ENCODE measurements at regions of chr20 and their contacts with region 1.

Region 1: GRCh38 chr20:1900321-1900801 is 5.2 kb downstream of the SIRPA start:
- DNase-seq: peak; percentile 52
- ATAC-seq: peak; percentile 22
- H3K4me3 ChIP-seq: no peak overlapping the region
- H3K4me3 Mint-ChIP-seq: no peak overlapping the region
- H3K27ac ChIP-seq: no peak overlapping the region
- H3K27ac Mint-ChIP-seq: no peak overlapping the region
- H3K4me1 ChIP-seq: peaks cover 33 to 37% of the 10 kb centered on the region in 2 donors
- H3K4me1 Mint-ChIP-seq: peaks cover 45% of the 10 kb centered on the region
- H3K27me3 ChIP-seq: no peaks in the 10 kb centered on the region
- H3K27me3 Mint-ChIP-seq: no peaks in the 10 kb centered on the region
- CTCF ChIP-seq: peak; percentile 37

Region 2: GRCh38 chr20:1844325-1845162 is 55.8 kb before region 1 on chr20:
- CTCF ChIA-PET with region 1: interaction called, 5 read pairs
- POLR2A ChIA-PET with region 1: no interaction called
- intact Hi-C with region 1: loop called (anchors 2 kb)
- DNase-seq: peak; percentile 91
- ATAC-seq: peak; percentile 98
- H3K4me3 ChIP-seq: peak overlapping the region in 1 of 5 experiments; percentile 9
- H3K4me3 Mint-ChIP-seq: peak overlapping the region; percentile 77
- H3K27ac ChIP-seq: peak overlapping the region; percentile 29 to 55
- H3K27ac Mint-ChIP-seq: peak overlapping the region; percentile 91
- H3K4me1 ChIP-seq: peaks cover 46 to 50% of the 10 kb centered on the region in 2 donors
- H3K4me1 Mint-ChIP-seq: peaks cover 69% of the 10 kb centered on the region
- H3K27me3 ChIP-seq: no peaks in the 10 kb centered on the region
- H3K27me3 Mint-ChIP-seq: no peaks in the 10 kb centered on the region
- CTCF ChIP-seq: no peak

Measured in B cell (primary cell).